Astrocyte of the cerebellum (primary cell): ENCODE measurements at regions of chr15 and their contacts with region 1.

Region 1: GRCh38 chr15:41790756-41791546 is 16.7 kb downstream of the MAPKBP1 start:
- DNase-seq: peak; percentile 62
- H3K4me3 ChIP-seq: no peak overlapping the region
- CTCF ChIP-seq: no peak

Region 2: DNA sequence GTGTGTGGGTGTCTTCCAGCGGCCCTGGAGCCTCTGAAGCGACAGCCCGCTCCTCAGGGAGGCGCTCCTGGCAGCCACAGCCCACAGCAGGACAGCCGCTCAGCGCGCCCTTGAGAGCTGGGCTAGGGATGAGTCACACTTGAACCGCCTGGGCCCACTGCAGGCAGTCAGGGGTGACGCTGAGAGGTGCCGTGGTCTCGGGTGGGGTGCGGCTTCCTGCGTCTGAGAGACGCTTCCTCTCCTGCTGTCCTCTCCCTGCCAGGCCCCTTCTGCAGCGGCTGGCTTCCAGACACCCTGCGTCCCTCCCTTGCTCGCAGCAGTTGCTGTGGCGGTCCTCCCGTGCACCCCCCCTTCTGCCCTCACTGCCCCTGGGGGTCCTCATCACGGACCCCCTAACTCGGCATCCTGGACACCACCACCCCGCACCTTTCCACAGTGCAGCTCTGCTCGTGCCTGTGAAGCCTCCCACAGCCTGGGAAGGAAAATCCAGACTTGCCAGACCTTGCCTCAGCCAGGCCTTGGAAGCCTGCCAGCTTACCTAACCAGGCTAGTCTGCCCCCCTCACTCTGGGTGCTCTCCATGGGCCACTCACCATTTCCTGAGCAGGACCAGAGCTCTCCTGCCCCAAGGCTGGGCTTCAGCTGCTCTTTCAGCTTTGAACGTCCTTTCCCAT is 104.0 kb after region 1 on chr15:
- in situ Hi-C with region 1: loop called (anchors 25 kb)
- DNase-seq: peak; percentile 20
- H3K4me3 ChIP-seq: no peak overlapping the region
- CTCF ChIP-seq: no peak

Region 3: DNA sequence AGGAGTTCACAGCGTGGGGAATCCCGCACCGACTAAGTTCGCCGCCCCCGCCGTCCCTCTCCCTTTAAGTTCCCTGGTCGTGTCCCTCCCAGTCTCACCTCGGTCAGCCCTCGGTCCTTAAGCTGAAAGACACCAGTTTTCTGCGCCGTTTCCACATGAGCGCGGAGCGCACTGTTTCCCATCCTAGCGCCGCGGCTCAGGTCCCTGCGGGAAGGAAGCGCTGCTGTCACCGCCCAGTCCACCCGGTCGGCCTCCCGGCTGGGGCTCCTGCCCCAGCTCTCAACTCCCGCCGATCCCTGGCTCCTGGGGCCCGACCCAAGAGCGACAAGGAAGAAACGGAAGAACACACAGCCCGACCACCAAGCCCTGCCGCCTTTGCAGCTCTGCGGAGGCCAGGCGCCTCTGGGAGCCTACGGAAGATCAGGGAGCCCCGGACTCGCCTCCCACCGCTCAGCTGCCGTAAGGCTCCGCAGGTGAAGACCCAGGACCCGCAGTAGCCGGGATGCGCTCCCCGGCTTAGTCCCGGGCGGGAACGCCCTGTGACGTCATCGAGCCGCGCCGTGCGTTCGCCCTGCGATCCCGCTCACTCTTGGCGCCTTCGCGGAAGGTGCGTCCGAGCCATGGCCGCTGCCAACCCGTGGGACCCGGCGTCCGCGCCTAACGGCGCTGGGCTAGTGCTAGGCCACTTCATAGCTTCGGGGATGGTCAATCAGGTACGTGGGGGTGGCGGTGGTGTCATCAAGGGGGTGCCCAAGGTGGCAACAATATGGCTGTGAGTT is 757.5 kb after region 1 on chr15 and contains the starts of genes HAUS2 and LRRC57:
- in situ Hi-C with region 1: no loop called
- DNase-seq: peak; percentile 53
- H3K4me3 ChIP-seq: peak within 1 kb of the TSS; percentile 94
- CTCF ChIP-seq: no peak